ENCODE measurements at regions of chr11 and their contacts with region 1.

Region 1: DNA sequence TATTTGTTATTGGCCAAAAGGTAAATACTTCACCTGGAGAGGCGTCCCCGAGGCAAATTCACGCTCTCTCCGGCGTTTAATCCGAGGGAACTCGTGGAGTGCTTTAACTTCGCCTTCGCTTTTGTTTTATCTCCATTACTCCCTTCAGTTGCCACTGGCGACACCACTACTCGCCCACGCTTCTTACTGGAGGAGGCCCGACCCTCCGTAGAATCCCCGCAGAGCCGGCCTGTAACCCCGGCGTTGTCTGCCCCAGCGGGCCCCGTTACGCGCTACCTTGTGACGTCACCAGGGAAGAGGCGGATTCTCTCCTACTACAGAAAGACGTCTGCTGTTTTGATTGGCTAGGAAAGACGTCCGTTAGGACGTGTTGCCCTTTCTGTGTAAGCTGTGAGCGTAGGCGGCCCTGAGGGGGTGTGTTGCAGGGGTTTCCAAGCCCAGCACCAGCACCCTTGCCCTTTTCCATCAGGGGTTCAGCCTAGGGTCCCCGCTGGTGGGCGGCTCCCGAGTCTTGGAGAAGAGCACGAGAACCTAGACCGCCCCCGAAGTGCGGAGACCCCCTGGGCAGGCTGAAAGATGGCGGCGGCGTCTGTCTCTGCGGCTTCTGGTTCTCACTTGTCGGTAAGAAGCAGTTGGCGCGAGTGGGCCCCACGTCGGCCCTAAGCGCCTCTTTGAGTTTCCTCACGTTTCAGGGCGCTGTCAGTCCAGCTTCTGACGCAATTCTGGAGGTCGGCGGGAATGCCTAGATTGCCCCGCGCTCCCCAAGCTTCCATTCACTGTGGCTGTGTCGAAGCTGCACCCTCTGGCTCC is at the start of gene CEP57:
- DNase-seq: peak; percentile 99
- H3K4me3 Mint-ChIP-seq: peak within 1 kb of the TSS; percentile 97
- H3K27ac Mint-ChIP-seq: peak within 1 kb of the TSS; percentile 100
- H3K4me1 Mint-ChIP-seq: peaks cover 17% of the 10 kb centered on the region
- H3K27me3 Mint-ChIP-seq: no peaks in the 10 kb centered on the region
- CTCF ChIP-seq: no peak
- total RNA-seq, gene CEP57: 73.7 and 78.8 TPM in 2 replicates

Region 2: DNA sequence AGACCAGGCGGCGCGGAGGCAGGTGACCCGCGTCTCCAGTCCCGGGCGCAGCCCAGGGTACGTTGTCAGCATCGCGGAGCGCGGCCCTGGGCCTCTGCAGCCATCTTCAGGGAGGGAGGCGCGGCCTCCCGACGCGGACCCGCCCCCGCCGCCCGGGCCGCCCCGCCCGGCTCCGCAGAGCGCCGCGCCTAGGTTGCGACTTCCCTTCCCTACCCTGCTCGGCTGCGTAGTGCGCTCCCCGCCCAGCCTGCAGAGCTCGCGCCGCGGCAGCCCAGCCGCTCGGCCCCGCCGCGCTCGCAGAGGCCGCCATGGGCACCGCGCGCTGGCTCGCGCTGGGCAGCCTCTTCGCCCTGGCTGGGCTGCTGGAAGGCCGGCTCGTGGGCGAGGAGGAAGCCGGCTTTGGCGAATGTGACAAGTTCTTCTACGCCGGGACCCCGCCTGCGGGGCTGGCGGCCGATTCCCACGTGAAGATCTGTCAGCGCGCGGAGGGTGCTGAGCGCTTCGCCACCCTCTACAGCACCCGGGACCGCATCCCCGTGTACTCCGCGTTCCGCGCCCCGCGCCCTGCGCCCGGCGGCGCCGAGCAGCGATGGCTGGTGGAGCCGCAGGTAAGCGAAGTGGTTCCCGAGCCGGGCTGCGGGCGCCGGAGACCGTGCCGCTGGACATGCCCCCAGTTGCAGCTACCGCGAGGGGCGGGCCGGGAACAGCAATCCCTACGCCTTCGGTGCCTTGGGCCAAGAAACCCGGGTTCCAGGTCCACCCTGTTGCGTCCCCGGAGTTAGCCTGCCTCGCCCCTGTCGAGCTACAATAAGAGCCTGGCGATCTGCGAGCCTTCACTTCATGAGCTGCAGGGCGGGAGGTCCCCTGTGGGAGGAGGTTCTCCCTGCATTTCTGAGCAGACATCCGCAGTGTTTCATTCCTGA is 700.4 kb before region 1 on chr11 and contains the start of gene ENDOD1:
- CTCF ChIA-PET with region 1: no interaction called
- POLR2A ChIA-PET with region 1: interaction called, 13 read pairs
- intact Hi-C with region 1: no loop called
- DNase-seq: peak; percentile 80
- H3K4me3 Mint-ChIP-seq: peak within 1 kb of the TSS; percentile 85
- H3K27ac Mint-ChIP-seq: peak within 1 kb of the TSS; percentile 64
- H3K4me1 Mint-ChIP-seq: peaks cover 36% of the 10 kb centered on the region
- H3K27me3 Mint-ChIP-seq: no peaks in the 10 kb centered on the region
- CTCF ChIP-seq: no peak
- total RNA-seq, gene ENDOD1: 10.8 and 11.4 TPM in 2 replicates

Region 3: GRCh38 chr11:95671768-95672167 is 118.6 kb before region 1 on chr11:
- CTCF ChIA-PET with region 1: no interaction called
- POLR2A ChIA-PET with region 1: no interaction called
- intact Hi-C with region 1: no loop called
- DNase-seq: no peak
- H3K4me3 Mint-ChIP-seq: no peak overlapping the region
- H3K27ac Mint-ChIP-seq: no peak overlapping the region
- H3K4me1 Mint-ChIP-seq: no peaks in the 10 kb centered on the region
- H3K27me3 Mint-ChIP-seq: no peaks in the 10 kb centered on the region
- CTCF ChIP-seq: no peak

Region 4: DNA sequence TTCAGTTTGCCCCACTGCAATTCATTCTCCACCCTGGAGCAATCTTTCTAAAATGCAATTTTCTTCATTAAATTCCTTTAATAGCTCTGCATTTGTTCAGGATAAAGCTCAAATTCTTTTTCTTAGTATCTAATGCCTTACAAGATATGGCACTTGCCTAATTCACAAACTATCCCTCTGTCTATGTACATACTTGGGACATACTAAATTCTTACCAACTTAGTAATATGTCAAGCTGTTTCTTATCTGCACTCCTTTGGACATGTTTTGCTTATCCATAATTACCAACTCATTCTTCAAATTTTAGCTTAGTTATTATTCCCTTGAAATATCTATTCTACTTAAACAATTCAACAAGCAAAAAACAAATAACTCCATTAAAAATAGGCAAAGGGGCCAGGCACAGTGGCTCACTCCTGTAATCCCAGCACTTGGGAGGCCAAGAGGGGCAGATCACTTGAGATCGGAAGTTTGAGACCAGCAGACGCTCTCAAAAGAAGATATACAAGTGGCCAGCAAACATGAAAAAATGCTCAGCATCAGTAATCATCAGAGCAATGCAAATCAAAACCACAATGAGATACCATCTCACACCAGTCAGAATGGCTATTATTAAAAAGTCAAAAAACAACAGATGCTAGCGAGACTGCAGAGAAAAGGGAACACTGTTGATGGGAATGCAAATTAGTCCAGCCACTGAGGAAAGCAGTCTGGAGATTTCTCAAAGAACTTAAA is 97.6 kb before region 1 on chr11:
- CTCF ChIA-PET with region 1: no interaction called
- POLR2A ChIA-PET with region 1: no interaction called
- intact Hi-C with region 1: no loop called
- DNase-seq: no peak
- H3K4me3 Mint-ChIP-seq: no peak overlapping the region
- H3K27ac Mint-ChIP-seq: no peak overlapping the region
- H3K4me1 Mint-ChIP-seq: no peaks in the 10 kb centered on the region
- H3K27me3 Mint-ChIP-seq: no peaks in the 10 kb centered on the region
- CTCF ChIP-seq: no peak

Region 5: GRCh38 chr11:95764267-95764898 is 25.9 kb before region 1 on chr11:
- CTCF ChIA-PET with region 1: interaction called, 7 read pairs
- POLR2A ChIA-PET with region 1: interaction called, 10 read pairs
- intact Hi-C with region 1: no loop called
- DNase-seq: peak; percentile 54
- H3K4me3 Mint-ChIP-seq: no peak overlapping the region
- H3K27ac Mint-ChIP-seq: no peak overlapping the region
- H3K4me1 Mint-ChIP-seq: peaks cover 10% of the 10 kb centered on the region
- H3K27me3 Mint-ChIP-seq: no peaks in the 10 kb centered on the region
- CTCF ChIP-seq: peak; percentile 61

Region 6: GRCh38 chr11:95835768-95836488 is 45.6 kb after region 1 on chr11:
- CTCF ChIA-PET with region 1: interaction called, 11 read pairs
- POLR2A ChIA-PET with region 1: interaction called, 7 read pairs
- intact Hi-C with region 1: no loop called
- DNase-seq: peak; percentile 89
- H3K4me3 Mint-ChIP-seq: no peak overlapping the region
- H3K27ac Mint-ChIP-seq: peak overlapping the region; percentile 17
- H3K4me1 Mint-ChIP-seq: peaks cover 11% of the 10 kb centered on the region
- H3K27me3 Mint-ChIP-seq: no peaks in the 10 kb centered on the region
- CTCF ChIP-seq: peak; percentile 72

Region 7: GRCh38 chr11:96389720-96390487 is 599.6 kb after region 1 on chr11 and contains the starts of genes CCDC82 and JRKL:
- CTCF ChIA-PET with region 1: interaction called, 6 read pairs
- POLR2A ChIA-PET with region 1: interaction called, 42 read pairs
- intact Hi-C with region 1: loop called (anchors 1 kb)
- DNase-seq: peak; percentile 98
- H3K4me3 Mint-ChIP-seq: peak within 1 kb of the TSS; percentile 77
- H3K27ac Mint-ChIP-seq: peak within 1 kb of the TSS; percentile 93
- H3K4me1 Mint-ChIP-seq: peaks cover 11% of the 10 kb centered on the region
- H3K27me3 Mint-ChIP-seq: no peaks in the 10 kb centered on the region
- CTCF ChIP-seq: no peak
- total RNA-seq, gene CCDC82: 15.8 and 21.4 TPM in 2 replicates
- total RNA-seq, gene JRKL: 11.5 and 16.3 TPM in 2 replicates